Mucosa of descending colon (tissue), 3 donors: ENCODE measurements at regions of chr6 and their contacts with region 1.

Region 1: GRCh38 chr6:153634416-153634815 is 404.6 kb upstream of the OPRM1 start:
- DNase-seq: no peak
- ATAC-seq: no peak
- H3K4me3 ChIP-seq: no peak overlapping the region
- H3K4me1 ChIP-seq: no peaks in the 10 kb centered on the region
- CTCF ChIP-seq: no peak

Region 2: DNA sequence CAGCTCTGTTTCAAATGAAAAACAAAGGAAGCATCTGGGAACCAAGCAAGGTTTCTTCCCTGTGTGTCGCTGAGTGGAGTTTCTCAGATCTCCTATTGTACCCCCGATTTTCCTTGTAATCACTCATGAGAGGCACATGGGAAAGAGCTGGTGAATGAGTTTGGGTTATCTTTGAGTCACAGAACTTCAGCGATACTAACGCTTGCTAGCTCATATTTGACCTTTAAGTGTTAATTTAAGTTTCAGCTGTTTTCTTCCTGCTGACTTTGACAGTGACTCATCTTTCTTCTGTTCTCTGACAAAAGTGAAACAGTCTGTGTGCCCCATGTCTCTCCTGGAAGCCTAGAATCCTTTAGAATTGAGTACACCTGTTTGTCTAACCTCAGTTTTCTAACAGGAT is 242.3 kb before region 1 on chr6:
- intact Hi-C with region 1: loop called in 1 of 2 experiments (anchors 5 kb)
- DNase-seq: no peak
- ATAC-seq: no peak
- H3K4me3 ChIP-seq: no peak overlapping the region
- H3K4me1 ChIP-seq: no peaks in the 10 kb centered on the region
- CTCF ChIP-seq: no peak

Region 3: DNA sequence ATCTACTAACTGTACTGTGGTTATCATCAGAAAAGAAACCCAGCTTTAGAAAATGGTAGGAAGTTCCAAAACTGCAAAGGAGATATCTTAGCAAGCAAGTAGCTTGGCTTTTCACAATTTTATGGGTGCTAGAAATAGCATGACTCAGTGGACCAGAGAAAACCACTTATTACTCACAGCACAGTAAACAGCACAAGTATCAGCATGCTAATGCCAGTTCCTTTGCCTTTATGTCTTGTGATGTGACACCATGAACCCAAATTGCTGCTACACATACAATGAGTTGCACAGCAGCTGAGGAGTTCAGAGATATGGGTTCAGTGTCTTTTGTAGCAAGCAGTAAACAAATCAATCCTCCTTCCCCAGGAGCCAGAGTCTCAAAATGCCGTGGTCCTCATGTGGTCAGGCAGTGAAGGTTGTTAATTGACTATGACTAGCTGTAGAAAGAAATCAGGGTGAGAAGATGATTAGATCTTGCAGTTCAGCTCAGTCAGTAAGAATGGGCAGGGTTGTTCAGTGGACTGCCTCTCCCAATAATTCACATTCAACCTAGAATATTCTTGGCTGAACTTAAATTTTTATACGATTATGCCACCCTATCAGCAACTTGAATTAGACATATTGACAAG is 477.9 kb after region 1 on chr6:
- intact Hi-C with region 1: no loop called
- DNase-seq: no peak
- ATAC-seq: no peak
- H3K4me3 ChIP-seq: no peak overlapping the region
- H3K4me1 ChIP-seq: no peaks in the 10 kb centered on the region
- CTCF ChIP-seq: no peak